ENCODE measurements at regions of chr6 and their contacts with region 1.

Region 1: DNA sequence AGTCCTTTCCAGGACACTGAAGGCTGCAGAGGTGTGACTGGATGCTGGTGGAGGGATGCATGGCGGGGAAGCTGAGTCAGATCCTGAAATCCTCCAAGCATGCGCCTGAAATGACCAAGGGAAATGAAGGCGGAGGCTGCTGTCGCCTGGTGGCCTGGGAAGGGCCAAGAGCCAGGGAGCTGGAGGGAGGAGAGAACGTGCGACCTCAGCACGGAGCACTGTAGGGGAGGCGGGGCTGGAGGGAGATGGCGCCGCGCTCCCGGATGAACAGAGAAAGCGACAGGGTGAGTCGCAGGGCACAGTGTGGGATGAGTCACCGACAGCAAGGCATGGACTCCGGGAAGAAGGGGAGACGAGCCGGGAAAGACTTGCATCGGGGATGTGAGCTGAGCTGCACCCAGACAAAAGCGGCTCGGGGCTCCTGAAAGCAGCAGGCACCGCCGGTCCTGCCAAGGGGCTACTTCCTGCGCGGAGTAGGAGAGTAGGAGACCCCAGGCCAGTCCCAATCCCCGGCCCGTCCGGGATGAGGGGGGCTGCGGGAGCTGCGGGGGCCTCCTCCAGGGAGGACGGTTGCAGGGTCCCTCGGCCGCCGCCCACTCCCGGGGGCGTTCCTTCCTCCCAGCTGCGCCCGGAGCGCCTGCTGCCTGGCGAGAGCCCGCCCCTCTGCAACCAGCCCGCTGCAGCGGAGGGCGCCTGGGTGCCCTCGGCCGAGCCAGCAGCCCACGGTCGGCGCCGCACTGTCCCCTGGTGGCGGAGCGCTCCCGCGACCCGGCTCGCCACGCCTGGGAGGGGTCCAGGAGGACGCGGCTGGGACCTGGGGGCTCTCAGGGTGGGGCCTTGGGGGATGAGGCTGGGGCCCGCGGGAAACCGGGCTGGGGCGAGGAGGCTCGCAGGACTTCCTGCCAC is 11.0 kb upstream of the NQO2 start:
- DNase-seq: peak; percentile 93 to 97 (median 97)
- H3K4me3 ChIP-seq: peak overlapping the region; percentile 45 to 64 (median 55)
- H3K27ac ChIP-seq: peak overlapping the region; percentile 97 to 100 (median 98)
- H3K4me1 ChIP-seq: peaks cover 13 to 39% of the 10 kb centered on the region in 2 donors
- H3K27me3 ChIP-seq: no peaks in the 10 kb centered on the region
- CTCF ChIP-seq: peak; percentile 55 to 95 (median 85)
- POLR2A ChIP-seq: peak; percentile 36 to 84

Region 2: GRCh38 chr6:2862712-2863181 is 125.9 kb before region 1 on chr6:
- intact Hi-C with region 1: no loop called
- DNase-seq: no peak
- H3K4me3 ChIP-seq: no peak overlapping the region
- H3K27ac ChIP-seq: no peak overlapping the region
- H3K4me1 ChIP-seq: peaks cover 13 to 26% of the 10 kb centered on the region in 2 donors
- H3K27me3 ChIP-seq: no peaks in the 10 kb centered on the region
- CTCF ChIP-seq: no peak
- POLR2A ChIP-seq: no peak

Region 3: DNA sequence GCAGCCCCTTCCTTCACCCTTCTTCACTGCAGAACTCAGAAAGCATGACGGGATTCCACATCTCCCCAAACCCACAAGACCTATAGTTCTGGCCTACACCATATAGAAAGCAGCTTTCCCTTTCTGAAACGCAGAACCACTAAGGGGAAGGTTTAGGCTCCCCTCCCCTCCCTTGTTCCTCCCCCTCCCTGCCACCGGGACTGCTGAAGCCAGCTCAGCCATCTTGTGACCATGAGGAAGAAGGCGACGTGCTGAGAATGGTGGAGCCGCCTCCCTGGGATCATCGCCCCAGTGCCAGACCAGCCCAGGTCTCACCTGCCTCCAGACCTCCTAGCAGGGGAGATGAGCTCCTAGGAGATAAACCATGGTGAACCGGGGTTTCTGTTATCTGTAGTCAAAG is 37.0 kb before region 1 on chr6:
- intact Hi-C with region 1: loop called in 1 of 2 experiments (anchors 2 kb)
- DNase-seq: peak in 6 of 7 donors; percentile 15 to 62 (median 53)
- H3K4me3 ChIP-seq: no peak overlapping the region
- H3K27ac ChIP-seq: peak overlapping the region in 4 of 5 donors; percentile 32 to 69 (median 56)
- H3K4me1 ChIP-seq: peaks cover 6 to 14% of the 10 kb centered on the region in 2 donors
- H3K27me3 ChIP-seq: no peaks in the 10 kb centered on the region
- CTCF ChIP-seq: no peak
- POLR2A ChIP-seq: no peak